Activated CD4-positive, alpha-beta T cell treated with anti-CD3 and anti-CD28 coated beads, Interleukin-2, amount 10 ng/mL, durations not matched to agents 24 days and 14 days (primary cell): ENCODE measurements at regions of chr5 and their contacts with region 1.

Region 1: DNA sequence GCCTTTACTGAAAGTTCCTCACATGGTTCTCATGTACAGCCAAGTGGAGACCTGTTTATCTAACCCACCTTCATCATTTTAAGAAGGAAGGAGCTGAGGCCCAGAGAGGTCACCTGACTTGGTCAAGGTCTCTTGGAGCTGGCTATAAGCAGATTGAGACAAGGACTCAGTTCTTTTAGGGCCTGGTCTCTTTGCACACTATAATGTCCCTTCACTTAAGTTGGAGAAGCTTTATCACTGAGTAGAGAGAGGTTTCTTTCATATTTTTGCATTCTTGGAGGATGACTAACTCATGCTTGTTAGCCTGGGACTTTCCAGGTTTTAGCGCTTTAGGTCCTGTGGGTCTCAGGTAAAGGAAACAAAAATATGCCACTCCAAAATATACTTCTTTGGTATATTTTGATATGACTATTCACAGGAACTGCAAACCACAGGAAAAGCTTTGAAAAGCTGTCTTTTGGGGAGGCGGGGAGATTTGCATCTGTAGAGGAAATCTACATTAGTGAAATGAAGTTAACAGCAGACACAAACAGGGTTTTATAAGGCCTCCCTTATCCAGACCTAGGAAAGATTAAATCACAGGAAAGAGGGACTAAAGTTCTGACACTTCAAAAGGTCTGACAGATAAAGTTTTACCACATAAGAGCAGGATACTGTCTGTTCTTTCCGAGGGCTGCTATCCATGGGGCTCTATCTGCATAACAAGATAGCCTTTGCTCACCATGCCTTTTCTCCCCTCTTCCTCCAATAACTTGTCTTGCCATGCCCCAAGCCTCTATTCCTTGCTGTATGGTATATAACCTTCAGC is 95.8 kb upstream of the ANKRD55 start:
- DNase-seq: peak; percentile 89
- H3K4me3 Mint-ChIP-seq: peak overlapping the region; percentile 67
- H3K27ac Mint-ChIP-seq: peak overlapping the region; percentile 89
- H3K4me1 Mint-ChIP-seq: peaks cover 57% of the 10 kb centered on the region
- H3K27me3 Mint-ChIP-seq: no peaks in the 10 kb centered on the region

Region 2: DNA sequence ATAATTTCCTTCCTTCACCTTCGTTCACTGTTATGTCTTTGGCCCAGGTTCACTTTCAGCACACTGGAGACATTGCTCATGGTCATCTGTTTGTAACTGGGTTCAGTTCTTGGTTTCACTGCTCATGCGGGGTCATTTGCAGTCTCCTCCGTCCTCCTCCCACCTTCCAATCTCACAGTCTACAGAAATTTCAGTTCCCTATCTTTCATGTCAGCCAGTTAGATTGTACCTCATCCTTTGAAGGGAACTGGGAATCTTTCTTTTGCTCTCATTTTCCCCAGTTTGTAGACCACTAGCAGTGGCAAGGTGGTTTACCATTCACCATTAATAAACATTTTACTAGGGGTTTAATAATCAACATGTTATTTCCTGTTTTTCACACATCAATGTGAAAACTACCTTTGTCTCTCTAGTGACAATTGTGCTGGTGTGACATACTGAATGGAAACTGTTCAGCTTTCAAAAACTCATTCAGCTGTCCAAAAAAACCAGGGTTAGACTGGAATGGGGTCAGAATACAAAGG is 233.3 kb before region 1 on chr5:
- intact Hi-C with region 1: loop called (anchors 10 kb)
- DNase-seq: no peak
- H3K4me3 Mint-ChIP-seq: peak overlapping the region; percentile 28
- H3K27ac Mint-ChIP-seq: peak overlapping the region; percentile 12
- H3K4me1 Mint-ChIP-seq: peaks cover 64% of the 10 kb centered on the region
- H3K27me3 Mint-ChIP-seq: no peaks in the 10 kb centered on the region

Region 3: GRCh38 chr5:56270568-56271392 is 58.2 kb before region 1 on chr5:
- intact Hi-C with region 1: loop called (anchors 1 kb)
- DNase-seq: peak; percentile 92
- H3K4me3 Mint-ChIP-seq: peak overlapping the region; percentile 27
- H3K27ac Mint-ChIP-seq: peak overlapping the region; percentile 20
- H3K4me1 Mint-ChIP-seq: peaks cover 27% of the 10 kb centered on the region
- H3K27me3 Mint-ChIP-seq: no peaks in the 10 kb centered on the region

Region 4: GRCh38 chr5:56481428-56482357 is 152.7 kb after region 1 on chr5:
- intact Hi-C with region 1: loop called (anchors 2 kb)
- DNase-seq: peak; percentile 78
- H3K4me3 Mint-ChIP-seq: peak overlapping the region; percentile 86
- H3K27ac Mint-ChIP-seq: peak overlapping the region; percentile 91
- H3K4me1 Mint-ChIP-seq: peaks cover 38% of the 10 kb centered on the region
- H3K27me3 Mint-ChIP-seq: no peaks in the 10 kb centered on the region

Region 5: DNA sequence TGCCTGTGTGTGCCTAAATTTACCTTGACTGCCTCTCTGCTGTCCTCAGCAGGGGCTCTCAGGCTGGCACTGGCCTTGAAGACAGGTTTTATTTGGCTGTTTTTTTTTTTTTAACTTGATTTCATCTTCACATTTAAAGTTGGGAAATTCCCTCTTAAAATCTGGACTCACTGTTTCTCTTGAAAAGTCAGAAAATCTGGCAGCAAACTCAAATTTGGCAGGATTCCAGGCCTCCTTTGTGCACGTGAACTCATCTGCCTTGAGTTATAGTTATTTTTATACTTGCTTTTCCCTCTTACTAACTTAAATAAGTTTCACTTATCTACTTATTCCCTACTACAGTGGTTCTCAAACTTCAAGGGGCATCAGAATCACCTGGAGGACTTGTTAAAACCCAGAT is 367.9 kb after region 1 on chr5:
- intact Hi-C with region 1: loop called (anchors 2 kb)
- DNase-seq: no peak
- H3K4me3 Mint-ChIP-seq: no peak overlapping the region
- H3K27ac Mint-ChIP-seq: no peak overlapping the region
- H3K4me1 Mint-ChIP-seq: peaks cover 77% of the 10 kb centered on the region
- H3K27me3 Mint-ChIP-seq: no peaks in the 10 kb centered on the region

Region 6: DNA sequence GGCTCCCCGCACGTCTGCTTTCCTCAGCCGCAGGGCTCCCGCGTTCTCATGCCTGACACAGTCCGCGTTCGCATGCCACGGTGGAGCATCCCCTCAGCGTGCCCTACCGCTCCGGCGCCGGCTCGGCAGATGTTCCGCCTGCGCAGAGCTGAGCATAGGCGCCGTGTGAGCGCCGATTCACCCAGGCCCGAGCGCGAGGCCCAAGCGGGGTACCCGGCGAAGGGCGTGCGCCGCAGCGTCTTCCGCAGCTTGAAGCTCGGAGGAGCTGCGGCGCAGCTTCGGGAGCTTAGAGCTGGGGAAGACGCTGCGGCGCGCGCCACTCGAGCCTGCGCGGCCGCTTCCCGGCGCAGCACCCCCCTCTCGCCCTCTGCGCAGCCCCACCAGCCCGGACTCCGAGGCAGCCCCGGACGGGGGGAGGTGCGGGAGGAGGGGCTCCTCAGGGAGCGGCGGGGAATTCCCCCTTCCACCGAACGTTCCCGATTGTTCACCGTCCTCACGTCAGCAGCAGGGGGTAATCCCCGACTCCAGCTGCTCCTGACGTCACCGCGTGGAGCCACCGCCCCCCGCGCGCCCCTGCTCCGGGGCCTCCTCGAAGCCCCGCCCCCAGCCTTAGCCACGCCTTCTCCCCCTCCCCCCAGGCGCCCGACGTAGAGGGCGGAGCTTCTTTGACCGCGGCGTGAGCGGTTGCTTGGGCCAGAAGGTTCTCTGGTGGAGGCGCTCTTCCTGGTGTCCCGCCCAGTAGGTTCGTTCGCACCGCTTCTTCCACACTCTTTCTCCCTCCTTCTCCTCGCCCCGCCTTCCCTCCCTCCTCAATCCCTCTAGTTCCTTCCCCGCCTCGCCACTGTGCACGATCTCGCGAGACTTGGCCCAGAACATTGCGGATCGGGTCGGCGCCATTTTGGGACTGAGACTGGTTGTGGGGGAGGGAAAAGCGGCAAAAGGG is 844.5 kb after region 1 on chr5 and contains the start of gene GPBP1:
- intact Hi-C with region 1: loop called (anchors 2 kb)
- DNase-seq: peak; percentile 99
- H3K4me3 Mint-ChIP-seq: peak within 1 kb of the TSS; percentile 97
- H3K27ac Mint-ChIP-seq: peak within 1 kb of the TSS; percentile 99
- H3K4me1 Mint-ChIP-seq: peaks cover 30% of the 10 kb centered on the region
- H3K27me3 Mint-ChIP-seq: peaks cover 2% of the 10 kb centered on the region
- total RNA-seq, gene GPBP1: 85.2 and 86.7 TPM in 2 replicates